GM12878 (cell line): ENCODE measurements at regions of chr2 and their contacts with region 1.

Region 1: DNA sequence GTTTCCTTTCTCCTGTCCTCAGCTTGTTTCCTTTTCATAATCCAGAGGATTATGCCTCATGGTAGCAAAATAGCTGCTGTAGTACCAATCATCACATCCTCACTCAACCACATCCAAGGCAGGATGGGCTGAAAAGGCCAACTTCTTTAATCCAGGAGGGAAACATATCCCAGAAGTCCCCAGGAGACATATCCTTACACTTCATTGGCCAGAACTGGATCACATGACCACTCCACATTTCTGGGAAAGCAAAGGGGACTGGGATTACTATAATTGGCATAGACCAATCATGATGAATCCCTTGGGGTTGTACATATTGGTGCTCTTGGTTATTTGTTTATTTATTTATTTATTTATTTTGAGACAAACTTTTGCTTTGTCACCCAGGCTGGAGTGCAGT is 54.0 kb upstream of the LYPD6B start:
- DNase-seq: no peak
- ATAC-seq: no peak
- H3K4me3 ChIP-seq: no peak overlapping the region
- H3K27ac ChIP-seq: no peak overlapping the region
- H3K4me1 ChIP-seq: no peaks in the 10 kb centered on the region
- H3K27me3 ChIP-seq: no peaks in the 10 kb centered on the region
- CTCF ChIP-seq: no peak
- EP300 ChIP-seq: no peak
- POLR2A ChIP-seq: no peak
- RAD21 ChIP-seq: no peak

Region 2: GRCh38 chr2:148330087-148330486 is 654.4 kb before region 1 on chr2:
- CTCF ChIA-PET with region 1: no interaction called
- POLR2A ChIA-PET with region 1: no interaction called
- RAD21 ChIA-PET with region 1: no interaction called
- SMC1A ChIA-PET with region 1: no interaction called
- in situ Hi-C with region 1: no loop called
- intact Hi-C with region 1: no loop called
- DNase-seq: no peak
- ATAC-seq: no peak
- H3K4me3 ChIP-seq: no peak overlapping the region
- H3K27ac ChIP-seq: no peak overlapping the region
- H3K4me1 ChIP-seq: no peaks in the 10 kb centered on the region
- H3K27me3 ChIP-seq: no peaks in the 10 kb centered on the region
- CTCF ChIP-seq: no peak
- EP300 ChIP-seq: no peak
- POLR2A ChIP-seq: no peak
- RAD21 ChIP-seq: no peak

Region 3: GRCh38 chr2:148968776-148969319 is 15.6 kb before region 1 on chr2:
- CTCF ChIA-PET with region 1: interaction called, 5 read pairs
- POLR2A ChIA-PET with region 1: no interaction called
- RAD21 ChIA-PET with region 1: no interaction called
- SMC1A ChIA-PET with region 1: interaction called, 10 read pairs
- in situ Hi-C with region 1: no loop called
- intact Hi-C with region 1: no loop called
- DNase-seq: peak; percentile 8
- ATAC-seq: no peak
- H3K4me3 ChIP-seq: no peak overlapping the region
- H3K27ac ChIP-seq: no peak overlapping the region
- H3K4me1 ChIP-seq: peaks cover 11% of the 10 kb centered on the region; the same call in 1 of the 2 replicates
- H3K27me3 ChIP-seq: no peaks in the 10 kb centered on the region
- CTCF ChIP-seq: no peak
- EP300 ChIP-seq: no peak
- POLR2A ChIP-seq: no peak
- RAD21 ChIP-seq: no peak

Region 4: GRCh38 chr2:149084924-149085795 is 100.7 kb after region 1 on chr2:
- CTCF ChIA-PET with region 1: no interaction called
- POLR2A ChIA-PET with region 1: no interaction called
- RAD21 ChIA-PET with region 1: no interaction called
- SMC1A ChIA-PET with region 1: no interaction called
- in situ Hi-C with region 1: no loop called
- intact Hi-C with region 1: no loop called
- DNase-seq: no peak
- ATAC-seq: no peak
- H3K4me3 ChIP-seq: no peak overlapping the region
- H3K27ac ChIP-seq: no peak overlapping the region
- H3K4me1 ChIP-seq: no peaks in the 10 kb centered on the region
- H3K27me3 ChIP-seq: no peaks in the 10 kb centered on the region
- CTCF ChIP-seq: no peak
- EP300 ChIP-seq: no peak
- POLR2A ChIP-seq: no peak
- RAD21 ChIP-seq: no peak